GM18951 (cell line): ENCODE measurements at regions of chr9 and their contacts with region 1.

Region 1: DNA sequence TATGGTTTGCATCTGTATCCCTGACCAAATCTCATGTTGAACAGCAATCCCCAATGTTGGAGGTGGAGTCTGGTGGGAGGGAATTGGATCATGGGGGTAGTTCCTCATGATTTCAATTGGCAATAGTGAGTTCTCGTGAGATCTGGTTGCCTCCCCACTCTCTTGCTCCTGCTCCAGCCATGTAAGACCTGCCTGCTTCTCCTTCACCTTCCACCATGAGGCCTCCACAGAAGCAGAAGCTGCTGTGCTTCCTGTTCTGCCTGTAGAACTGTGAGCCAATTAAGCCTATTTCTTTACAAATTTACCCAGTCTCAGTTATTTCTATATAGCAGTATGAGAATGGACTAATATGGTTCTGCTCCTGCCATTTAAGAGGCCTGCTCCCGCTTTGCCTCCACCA is 32.9 kb downstream of the SCAI start:
- POLR2A ChIP-seq: no peak

Region 2: GRCh38 chr9:125043631-125044030 is 66.8 kb before region 1 on chr9:
- in situ Hi-C with region 1: loop called (anchors 5 kb)
- POLR2A ChIP-seq: no peak

Region 3: GRCh38 chr9:125632321-125633138 is 522.1 kb after region 1 on chr9:
- in situ Hi-C with region 1: no loop called
- POLR2A ChIP-seq: no peak